ENCODE measurements at regions of chr7 and their contacts with region 1.

Region 1: GRCh38 chr7:93374345-93374940 is 142.3 kb downstream of the VPS50 start:
- DNase-seq: no peak
- H3K4me3 ChIP-seq: no peak overlapping the region
- H3K27ac ChIP-seq: no peak overlapping the region
- H3K4me1 ChIP-seq: no peaks in the 10 kb centered on the region
- H3K27me3 ChIP-seq: no peaks in the 10 kb centered on the region
- CTCF ChIP-seq: peak in 2 of 3 experiments; percentile 39 to 81; a peak in 2 of 4 replicates
- EP300 ChIP-seq: no peak
- POLR2A ChIP-seq: no peak
- RAD21 ChIP-seq: peak; percentile 65 to 70

Region 2: GRCh38 chr7:93245525-93246432 is 128.7 kb before region 1 on chr7:
- CTCF ChIA-PET with region 1: interaction called, 19 read pairs
- POLR2A ChIA-PET with region 1: no interaction called
- DNase-seq: no peak
- H3K4me3 ChIP-seq: no peak overlapping the region
- H3K27ac ChIP-seq: no peak overlapping the region
- H3K4me1 ChIP-seq: no peaks in the 10 kb centered on the region
- H3K27me3 ChIP-seq: no peaks in the 10 kb centered on the region
- CTCF ChIP-seq: peak in 2 of 3 experiments; percentile 20 to 23; a peak in 2 of 4 replicates
- EP300 ChIP-seq: no peak
- POLR2A ChIP-seq: no peak
- RAD21 ChIP-seq: peak; percentile 63 to 71

Region 3: DNA sequence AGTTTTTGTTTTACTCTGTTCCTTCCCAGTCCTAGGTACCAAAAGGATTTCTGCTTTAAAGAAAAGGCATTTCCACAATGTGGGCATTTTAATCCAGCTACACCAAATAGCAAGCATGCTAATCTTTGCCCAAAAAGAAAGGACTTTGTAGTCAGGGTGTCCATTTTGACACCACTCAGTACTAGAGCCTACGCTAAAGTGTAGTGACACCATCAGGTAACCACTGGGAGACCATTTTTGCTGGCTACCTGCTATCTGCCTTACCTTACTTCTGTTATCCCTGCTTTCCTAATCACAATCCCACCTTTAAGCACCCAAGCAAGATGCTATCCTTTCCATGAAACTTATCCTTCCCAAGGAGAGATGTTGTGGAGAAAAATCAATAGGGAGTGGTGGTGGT is 12.6 kb before region 1 on chr7:
- CTCF ChIA-PET with region 1: interaction called, 20 read pairs
- POLR2A ChIA-PET with region 1: interaction called, 4 read pairs
- DNase-seq: no peak
- H3K4me3 ChIP-seq: no peak overlapping the region
- H3K27ac ChIP-seq: no peak overlapping the region
- H3K4me1 ChIP-seq: no peaks in the 10 kb centered on the region
- H3K27me3 ChIP-seq: no peaks in the 10 kb centered on the region
- CTCF ChIP-seq: no peak
- EP300 ChIP-seq: no peak
- POLR2A ChIP-seq: no peak
- RAD21 ChIP-seq: 0 out of 4 replicates have a peak, but pooled peaks of 1 of the 2 experiments have one; percentile 4

Region 4: GRCh38 chr7:93463764-93464163 is 89.3 kb after region 1 on chr7:
- CTCF ChIA-PET with region 1: no interaction called
- POLR2A ChIA-PET with region 1: no interaction called
- DNase-seq: no peak
- H3K4me3 ChIP-seq: no peak overlapping the region
- H3K27ac ChIP-seq: no peak overlapping the region
- H3K4me1 ChIP-seq: peaks cover 0 to 2% (median 0%) of the 10 kb centered on the region in 4 experiments; a peak in 1 of 7 replicates
- H3K27me3 ChIP-seq: no peaks in the 10 kb centered on the region
- CTCF ChIP-seq: no peak
- EP300 ChIP-seq: no peak
- POLR2A ChIP-seq: no peak
- RAD21 ChIP-seq: no peak